ENCODE measurements at regions of chr4 and their contacts with region 1.

Region 1: DNA sequence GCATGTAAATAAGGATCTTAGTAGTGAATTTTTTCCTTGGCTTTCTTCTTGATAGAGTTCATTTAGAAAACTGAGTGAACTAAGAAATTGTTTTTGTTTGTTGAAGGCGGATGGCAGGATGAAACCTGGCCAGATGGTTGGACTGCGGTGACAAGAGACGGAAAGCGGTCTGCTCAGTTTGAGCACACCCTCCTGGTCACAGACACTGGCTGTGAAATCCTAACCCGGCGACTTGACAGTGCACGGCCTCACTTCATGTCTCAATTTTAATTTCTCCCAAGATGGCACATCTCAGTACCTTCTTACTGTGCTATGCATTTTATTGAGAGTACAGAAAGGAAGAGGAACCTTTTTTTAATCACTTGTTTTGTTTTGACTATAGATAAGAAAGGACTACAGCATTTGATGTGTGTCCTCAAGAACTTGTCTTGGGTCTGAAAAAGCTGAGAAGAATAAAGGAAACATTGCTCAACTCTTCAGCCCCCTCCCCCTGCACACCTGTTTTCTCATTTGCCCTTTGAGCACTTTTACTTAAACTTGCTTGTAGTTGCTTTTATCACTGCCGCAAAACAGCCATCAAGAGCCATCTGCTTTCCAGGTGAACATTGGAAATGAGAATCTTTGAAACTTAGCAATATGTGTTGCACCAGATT is 27.4 kb downstream of the ADH5 start:
- DNase-seq: no peak
- ATAC-seq: no peak
- H3K4me3 ChIP-seq: no peak overlapping the region
- H3K27ac ChIP-seq: no peak overlapping the region
- H3K4me1 ChIP-seq: peaks cover 24% of the 10 kb centered on the region
- H3K27me3 ChIP-seq: no peaks in the 10 kb centered on the region
- CTCF ChIP-seq: no peak

Region 2: DNA sequence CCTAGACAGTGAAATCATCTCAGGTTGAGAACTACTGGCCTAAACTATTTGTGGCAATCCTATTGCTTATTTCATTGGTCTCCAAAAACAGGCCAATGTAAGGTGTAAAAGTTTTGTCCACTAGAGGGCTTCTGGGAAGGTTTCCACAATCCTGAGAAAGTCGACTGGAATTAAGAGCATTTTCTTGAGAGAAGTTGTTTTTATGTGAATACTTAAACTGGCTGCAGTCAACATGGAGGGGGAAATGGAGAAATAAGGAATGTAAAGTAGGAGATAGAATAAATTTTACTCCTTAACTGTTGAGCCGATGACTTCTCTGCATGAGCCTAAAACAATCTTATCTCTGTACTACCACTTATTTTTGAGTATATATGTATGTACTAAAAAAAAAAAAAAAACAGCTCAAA is 121.3 kb before region 1 on chr4:
- CTCF ChIA-PET with region 1: no interaction called
- POLR2A ChIA-PET with region 1: no interaction called
- intact Hi-C with region 1: loop called (anchors 5 kb)
- DNase-seq: peak; percentile 83
- ATAC-seq: peak; percentile 60
- H3K4me3 ChIP-seq: no peak overlapping the region
- H3K27ac ChIP-seq: no peak overlapping the region
- H3K4me1 ChIP-seq: peaks cover 6% of the 10 kb centered on the region; the same call in 1 of the 2 replicates
- H3K27me3 ChIP-seq: no peaks in the 10 kb centered on the region
- CTCF ChIP-seq: peak; percentile 74

Region 3: DNA sequence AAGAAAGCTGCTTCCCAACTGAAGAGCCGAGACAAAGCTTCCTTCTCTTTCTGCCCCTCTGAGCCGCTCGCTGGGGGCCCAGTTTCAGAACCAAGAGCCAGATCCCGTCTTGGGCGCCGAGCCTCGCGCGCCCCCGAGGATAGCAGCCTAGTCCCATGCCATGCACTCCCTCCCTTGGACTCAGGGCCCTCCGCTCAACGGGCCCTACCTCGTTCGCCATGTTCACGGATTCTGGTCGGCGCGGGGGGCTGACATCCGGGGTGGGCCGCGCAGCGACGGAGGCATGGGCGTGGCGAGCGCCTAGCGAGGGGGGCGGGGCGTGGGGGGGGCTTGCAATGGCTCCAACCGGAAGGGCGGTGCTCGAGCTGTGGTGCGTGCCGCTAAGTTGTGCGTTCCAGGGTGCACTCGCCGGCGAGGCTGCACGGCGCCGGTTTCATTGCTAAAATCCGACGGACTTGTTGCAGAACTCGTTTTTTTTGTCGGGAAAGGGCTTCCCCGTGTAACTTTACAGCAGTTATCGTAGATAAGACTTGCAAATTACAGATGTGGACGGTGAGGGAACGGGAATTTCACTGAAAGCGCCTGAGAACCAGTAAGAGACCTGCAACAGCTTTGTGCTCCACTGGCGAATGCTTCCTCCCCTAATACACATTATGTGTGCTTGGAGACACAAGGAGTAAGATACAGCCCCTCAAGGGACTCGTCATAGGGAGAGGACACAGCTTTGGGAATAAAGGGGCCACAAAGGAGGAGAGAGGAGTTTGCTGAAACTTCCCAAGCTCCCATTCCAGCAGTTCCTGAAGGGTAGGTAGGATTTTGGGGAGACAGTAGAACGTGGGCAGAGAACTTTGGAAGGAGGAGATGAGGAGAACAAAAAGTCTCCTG is 27.5 kb after region 1 on chr4 and contains the start of gene ADH5:
- CTCF ChIA-PET with region 1: interaction called, 5 read pairs
- POLR2A ChIA-PET with region 1: no interaction called
- intact Hi-C with region 1: loop called (anchors 2 kb)
- DNase-seq: peak; percentile 71
- ATAC-seq: peak; percentile 85
- H3K4me3 ChIP-seq: peak within 1 kb of the TSS; percentile 91
- H3K27ac ChIP-seq: peak within 1 kb of the TSS; percentile 53
- H3K4me1 ChIP-seq: peaks cover 5% of the 10 kb centered on the region; the same call in 1 of the 2 replicates
- H3K27me3 ChIP-seq: no peaks in the 10 kb centered on the region
- CTCF ChIP-seq: no peak
- total RNA-seq, gene ADH5: 83.1 and 94.5 TPM in 2 replicates